B cell (primary cell): ENCODE measurements at regions of chr22 and their contacts with region 1.

Region 1: DNA sequence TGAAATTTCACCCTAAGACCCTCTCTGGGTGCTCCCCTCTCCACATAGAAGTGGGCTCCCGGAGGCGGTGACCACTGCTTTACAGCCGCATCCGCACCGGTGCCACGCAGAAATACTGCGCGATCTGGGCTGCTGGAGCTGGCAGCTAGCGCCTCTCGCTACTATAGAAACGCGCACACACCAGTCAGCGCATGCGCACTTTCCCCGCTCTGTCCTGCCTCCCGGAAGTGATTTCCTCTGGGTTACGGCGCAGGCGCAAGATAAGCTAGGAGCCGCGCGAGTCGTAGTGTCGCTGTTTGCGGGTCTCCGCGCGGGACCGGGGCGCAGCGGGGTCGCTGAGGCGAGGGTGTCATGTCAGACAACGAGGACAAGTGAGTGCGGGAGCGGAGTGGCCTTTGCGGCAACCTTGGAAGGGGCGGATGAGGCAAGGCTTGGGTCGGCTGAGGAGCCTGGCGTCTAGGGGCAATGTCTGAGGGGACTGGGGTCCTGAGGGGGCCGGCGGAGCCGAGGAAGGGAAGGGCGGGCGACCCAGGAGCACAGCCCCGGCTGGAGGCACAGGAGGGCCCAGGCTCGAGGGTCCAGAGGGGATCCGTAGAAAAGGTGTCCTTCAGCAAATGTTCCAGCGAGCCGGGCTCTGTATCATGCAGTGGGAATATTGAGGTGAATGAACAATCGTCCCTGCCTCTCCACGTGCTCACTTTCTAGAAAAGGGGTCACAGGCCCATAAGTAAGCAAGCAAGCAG is at the starts of genes C22orf23 and POLR2F:
- DNase-seq: peak; percentile 97
- ATAC-seq: peak; percentile 94
- H3K4me3 ChIP-seq: peak within 1 kb of the TSS; percentile 64 to 99 (median 88)
- H3K4me3 Mint-ChIP-seq: peak within 1 kb of the TSS; percentile 99
- H3K27ac ChIP-seq: peak within 1 kb of the TSS; percentile 24 to 76
- H3K27ac Mint-ChIP-seq: peak within 1 kb of the TSS; percentile 97
- H3K4me1 ChIP-seq: peaks cover 17 to 20% of the 10 kb centered on the region in 2 donors
- H3K4me1 Mint-ChIP-seq: peaks cover 26% of the 10 kb centered on the region
- H3K27me3 ChIP-seq: peaks cover 2 to 14% (median 8%) of the 10 kb centered on the region in 4 experiments
- H3K27me3 Mint-ChIP-seq: peaks cover 14% of the 10 kb centered on the region
- CTCF ChIP-seq: no peak
- total RNA-seq, gene C22orf23: not detected in 2 replicates
- total RNA-seq, gene POLR2F: 39.3 and 41.8 TPM in 2 replicates

Region 2: DNA sequence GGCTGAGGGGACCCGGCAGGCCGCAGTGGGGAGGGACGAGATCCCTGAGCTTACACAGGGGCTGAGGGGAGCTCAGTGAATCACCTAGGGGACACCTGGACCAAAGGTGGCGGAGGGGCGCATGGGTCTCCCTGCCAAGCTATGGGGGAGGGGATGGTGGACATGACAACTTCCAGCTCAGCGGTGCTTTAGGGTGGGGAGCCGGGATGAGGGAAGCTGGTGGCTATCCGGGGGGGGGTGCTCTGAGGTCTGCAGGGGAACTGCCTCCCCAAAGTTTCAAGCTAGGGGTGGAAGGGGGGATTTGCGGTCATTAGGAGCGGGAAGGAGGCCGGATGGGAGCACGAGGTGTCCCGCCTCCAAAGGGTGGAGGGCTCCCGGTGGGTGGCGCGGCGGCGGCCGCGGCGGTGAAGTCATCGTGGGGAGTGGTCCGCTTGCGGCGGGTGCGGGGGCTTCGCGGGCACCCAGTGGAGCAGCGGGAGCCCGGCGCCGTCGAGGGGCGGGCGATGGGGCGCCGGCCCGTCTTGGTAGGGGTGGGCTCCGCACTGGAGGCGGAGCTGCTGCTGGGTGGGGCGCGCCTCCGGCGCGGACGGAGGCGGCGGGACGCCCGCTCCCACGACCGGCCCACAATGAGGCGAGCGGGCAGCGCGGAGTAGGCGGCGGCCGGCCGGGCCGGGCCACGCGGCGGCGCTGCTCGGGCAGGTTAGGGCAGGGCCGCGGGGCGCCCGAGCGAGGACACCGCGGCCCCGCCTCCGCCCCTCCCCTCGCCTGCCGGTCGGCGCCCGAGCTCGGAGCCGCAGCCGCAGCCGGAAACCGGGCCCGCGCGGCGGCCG is 47.9 kb before region 1 on chr22 and contains the start of gene MICALL1:
- CTCF ChIA-PET with region 1: interaction called, 3 read pairs
- POLR2A ChIA-PET with region 1: interaction called, 4 read pairs
- intact Hi-C with region 1: loop called (anchors 1 kb)
- DNase-seq: peak; percentile 85
- ATAC-seq: peak; percentile 93
- H3K4me3 ChIP-seq: peak within 1 kb of the TSS in 4 of 5 experiments; percentile 36 to 86 (median 58)
- H3K4me3 Mint-ChIP-seq: peak within 1 kb of the TSS; percentile 86
- H3K27ac ChIP-seq: peak within 1 kb of the TSS in 1 of 2 donors; percentile 73
- H3K27ac Mint-ChIP-seq: peak within 1 kb of the TSS; percentile 86
- H3K4me1 ChIP-seq: peaks cover 10 to 16% of the 10 kb centered on the region in 2 donors
- H3K4me1 Mint-ChIP-seq: peaks cover 28% of the 10 kb centered on the region
- H3K27me3 ChIP-seq: no peaks in the 10 kb centered on the region
- H3K27me3 Mint-ChIP-seq: no peaks in the 10 kb centered on the region
- CTCF ChIP-seq: no peak
- total RNA-seq, gene MICALL1: 34.6 and 34.9 TPM in 2 replicates

Region 3: GRCh38 chr22:37965940-37966664 is 12.5 kb after region 1 on chr22:
- CTCF ChIA-PET with region 1: interaction called, 18 read pairs
- POLR2A ChIA-PET with region 1: interaction called, 3 read pairs
- intact Hi-C with region 1: no loop called
- DNase-seq: no peak
- ATAC-seq: no peak
- H3K4me3 ChIP-seq: no peak overlapping the region
- H3K4me3 Mint-ChIP-seq: no peak overlapping the region
- H3K27ac ChIP-seq: no peak overlapping the region
- H3K27ac Mint-ChIP-seq: no peak overlapping the region
- H3K4me1 ChIP-seq: no peaks in the 10 kb centered on the region
- H3K4me1 Mint-ChIP-seq: peaks cover 4% of the 10 kb centered on the region
- H3K27me3 ChIP-seq: no peaks in the 10 kb centered on the region
- H3K27me3 Mint-ChIP-seq: no peaks in the 10 kb centered on the region
- CTCF ChIP-seq: no peak